ENCODE measurements at regions of chr9 and their contacts with region 1.

Region 1: DNA sequence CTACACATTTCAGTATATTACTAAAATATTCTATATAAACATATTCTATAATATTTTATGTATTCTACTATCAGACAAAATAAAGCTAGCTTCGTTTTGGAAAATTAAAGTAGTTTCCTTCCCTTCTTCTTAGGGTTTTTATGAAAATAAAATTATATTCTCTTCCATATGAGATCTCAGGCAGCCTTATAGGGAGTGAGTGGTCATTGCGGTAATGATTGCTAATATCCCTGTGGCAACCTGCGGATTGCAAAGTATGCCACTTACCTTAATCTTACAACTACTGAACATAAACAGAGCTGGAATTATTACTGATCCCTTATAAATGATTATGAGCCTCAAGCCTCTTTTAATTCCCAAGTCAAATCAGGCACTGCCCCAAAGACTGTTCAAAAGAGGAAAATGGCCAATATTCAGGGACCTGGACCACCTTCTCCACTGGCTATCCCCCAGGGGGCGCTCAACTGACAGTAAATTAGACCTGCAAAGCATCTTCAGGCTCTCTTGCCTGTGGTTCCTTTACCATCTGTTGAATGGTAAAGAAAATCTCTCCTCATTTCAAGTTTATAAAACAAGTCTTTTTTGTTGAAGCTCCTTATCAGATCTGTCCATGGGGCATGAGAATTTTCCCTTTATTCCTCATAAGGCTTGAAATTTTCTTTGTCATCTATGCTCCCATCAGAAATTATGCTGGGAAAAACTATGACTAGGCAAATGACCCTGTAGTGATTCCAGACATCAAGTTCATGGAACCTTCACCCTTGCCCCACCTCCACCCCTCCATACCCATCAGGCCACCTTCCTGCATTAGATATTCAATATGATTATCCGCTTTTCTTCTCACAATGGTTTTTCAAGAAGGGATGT is 163.9 kb downstream of the CEMIP2 start:
- DNase-seq: peak in 9 of 10 donors; percentile 18 to 75 (median 53)
- H3K4me3 ChIP-seq: no peak overlapping the region
- H3K27ac ChIP-seq: no peak overlapping the region
- H3K27me3 ChIP-seq: no peaks in the 10 kb centered on the region
- CTCF ChIP-seq: peak; percentile 41 to 87 (median 75)

Region 2: DNA sequence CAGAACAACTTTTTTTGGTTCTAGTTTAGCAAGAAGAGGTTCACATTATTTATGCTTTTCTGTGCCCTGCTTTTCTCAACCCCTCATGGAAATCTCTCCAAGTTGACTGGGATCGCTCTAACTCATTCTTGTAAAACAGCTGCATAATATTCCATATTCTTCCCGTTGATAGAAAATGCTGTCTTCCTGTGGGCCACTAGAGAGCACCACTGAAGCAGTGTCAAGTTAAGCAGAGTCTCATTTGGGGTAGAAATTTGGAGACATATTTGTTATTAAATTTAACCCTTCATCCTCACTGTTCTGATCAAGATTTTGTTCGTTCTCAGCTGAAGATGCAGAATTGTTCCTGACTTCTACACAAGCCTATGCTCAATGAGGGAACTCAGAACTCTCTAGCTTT is 23.8 kb after region 1 on chr9:
- intact Hi-C with region 1: loop called in 1 of 2 experiments (anchors 2 kb)
- DNase-seq: no peak
- H3K4me3 ChIP-seq: no peak overlapping the region
- H3K27ac ChIP-seq: no peak overlapping the region
- H3K27me3 ChIP-seq: no peaks in the 10 kb centered on the region
- CTCF ChIP-seq: peak in 1 of 56 donors; percentile 11

Measured in dorsolateral prefrontal cortex (tissue), 120 donors.